AG04449 (cell line): ENCODE measurements at regions of chr3 and their contacts with region 1.

Region 1: GRCh38 chr3:51670823-51671733 is at the start of gene TEX264:
- DNase-seq: no peak
- H3K4me3 ChIP-seq: peak within 1 kb of the TSS; percentile 82
- CTCF ChIP-seq: no peak

Region 2: DNA sequence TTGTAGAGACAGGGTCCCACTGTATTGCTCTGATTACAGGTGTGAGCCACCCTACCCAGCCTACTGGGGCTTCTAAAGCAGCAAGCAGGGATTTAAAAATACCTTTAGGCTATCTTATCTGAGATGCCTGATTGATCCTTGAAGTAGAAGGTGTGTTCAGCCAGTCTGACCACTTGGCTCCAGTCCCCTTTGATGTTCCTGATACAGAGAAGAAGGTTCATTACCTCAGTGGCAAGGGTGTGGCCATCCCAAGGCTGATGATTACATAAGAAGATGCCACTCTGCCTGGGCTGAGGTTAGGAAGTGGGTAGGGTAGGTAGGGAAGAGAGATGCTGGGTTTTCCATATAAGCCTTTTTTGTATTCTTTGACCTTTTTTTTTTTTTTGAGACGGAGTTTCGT is 160.1 kb before region 1 on chr3:
- CTCF ChIA-PET with region 1: interaction called, 17 read pairs
- POLR2A ChIA-PET with region 1: no interaction called
- DNase-seq: no peak
- H3K4me3 ChIP-seq: no peak overlapping the region
- CTCF ChIP-seq: no peak

Region 3: DNA sequence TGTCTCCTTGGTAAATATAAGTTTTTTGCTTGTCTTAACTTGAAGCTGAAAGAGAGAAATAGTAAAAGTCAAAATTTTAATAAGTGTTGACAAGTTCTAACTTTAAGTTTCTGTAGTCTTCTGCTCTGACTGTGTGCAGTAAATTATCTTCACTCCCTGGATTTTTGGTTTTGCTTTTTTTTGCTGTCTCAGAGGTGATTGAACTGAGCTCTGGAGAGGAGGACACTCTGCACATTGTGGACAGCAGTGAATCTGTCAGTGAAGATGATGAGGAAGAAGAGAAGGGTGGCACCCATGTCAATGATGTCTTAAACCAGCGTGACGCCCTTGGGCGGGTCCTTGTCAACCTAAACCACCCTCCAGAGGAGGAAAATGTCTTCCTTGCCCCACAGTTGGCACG is 40.6 kb before region 1 on chr3:
- CTCF ChIA-PET with region 1: interaction called, 13 read pairs
- POLR2A ChIA-PET with region 1: no interaction called
- DNase-seq: no peak
- H3K4me3 ChIP-seq: no peak overlapping the region
- CTCF ChIP-seq: no peak

Region 4: GRCh38 chr3:51646091-51646490 is 25.0 kb before region 1 on chr3:
- CTCF ChIA-PET with region 1: interaction called, 88 read pairs
- POLR2A ChIA-PET with region 1: no interaction called
- DNase-seq: no peak
- H3K4me3 ChIP-seq: no peak overlapping the region
- CTCF ChIP-seq: no peak

Region 5: GRCh38 chr3:51682079-51682478 is 11.0 kb after region 1 on chr3:
- CTCF ChIA-PET with region 1: interaction called, 196 read pairs
- POLR2A ChIA-PET with region 1: interaction called, 5 read pairs
- DNase-seq: peak; percentile 63
- H3K4me3 ChIP-seq: no peak overlapping the region
- CTCF ChIP-seq: peak; percentile 84